CD4-positive, alpha-beta memory T cell (primary cell): ENCODE measurements at regions of chr13 and their contacts with region 1.

Region 1: GRCh38 chr13:102845630-102846260 is at the start of gene ERCC5:
- DNase-seq: peak; percentile 95 to 98 (median 97)
- H3K4me3 ChIP-seq: peak within 1 kb of the TSS; percentile 88 to 92
- H3K4me3 Mint-ChIP-seq: peak within 1 kb of the TSS; percentile 97 to 99 (median 98)
- H3K27ac ChIP-seq: peak within 1 kb of the TSS; percentile 96
- H3K27ac Mint-ChIP-seq: peak within 1 kb of the TSS; percentile 98 to 100 (median 99)
- H3K4me1 ChIP-seq: peaks cover 46% of the 10 kb centered on the region
- H3K4me1 Mint-ChIP-seq: peaks cover 27 to 55% (median 37%) of the 10 kb centered on the region in 4 donors
- H3K27me3 ChIP-seq: no peaks in the 10 kb centered on the region
- H3K27me3 Mint-ChIP-seq: no peaks in the 10 kb centered on the region
- total RNA-seq, gene ERCC5: 134 to 136 TPM

Region 2: GRCh38 chr13:102394158-102395053 is 451.3 kb before region 1 on chr13:
- CTCF ChIA-PET with region 1: interaction called, 8 read pairs
- POLR2A ChIA-PET with region 1: interaction called, 12 read pairs
- intact Hi-C with region 1: loop called (anchors 1 kb)
- DNase-seq: peak; percentile 93 to 95 (median 94)
- H3K4me3 ChIP-seq: peak overlapping the region; percentile 61 to 93
- H3K4me3 Mint-ChIP-seq: peak overlapping the region; percentile 88 to 94 (median 90)
- H3K27ac ChIP-seq: peak overlapping the region; percentile 59
- H3K27ac Mint-ChIP-seq: peak overlapping the region; percentile 86 to 95 (median 92)
- H3K4me1 ChIP-seq: peaks cover 12% of the 10 kb centered on the region
- H3K4me1 Mint-ChIP-seq: peaks cover 7 to 19% (median 13%) of the 10 kb centered on the region in 4 donors
- H3K27me3 ChIP-seq: peaks cover 9% of the 10 kb centered on the region
- H3K27me3 Mint-ChIP-seq: peaks cover 7% of the 10 kb centered on the region in 2 donors

Region 3: DNA sequence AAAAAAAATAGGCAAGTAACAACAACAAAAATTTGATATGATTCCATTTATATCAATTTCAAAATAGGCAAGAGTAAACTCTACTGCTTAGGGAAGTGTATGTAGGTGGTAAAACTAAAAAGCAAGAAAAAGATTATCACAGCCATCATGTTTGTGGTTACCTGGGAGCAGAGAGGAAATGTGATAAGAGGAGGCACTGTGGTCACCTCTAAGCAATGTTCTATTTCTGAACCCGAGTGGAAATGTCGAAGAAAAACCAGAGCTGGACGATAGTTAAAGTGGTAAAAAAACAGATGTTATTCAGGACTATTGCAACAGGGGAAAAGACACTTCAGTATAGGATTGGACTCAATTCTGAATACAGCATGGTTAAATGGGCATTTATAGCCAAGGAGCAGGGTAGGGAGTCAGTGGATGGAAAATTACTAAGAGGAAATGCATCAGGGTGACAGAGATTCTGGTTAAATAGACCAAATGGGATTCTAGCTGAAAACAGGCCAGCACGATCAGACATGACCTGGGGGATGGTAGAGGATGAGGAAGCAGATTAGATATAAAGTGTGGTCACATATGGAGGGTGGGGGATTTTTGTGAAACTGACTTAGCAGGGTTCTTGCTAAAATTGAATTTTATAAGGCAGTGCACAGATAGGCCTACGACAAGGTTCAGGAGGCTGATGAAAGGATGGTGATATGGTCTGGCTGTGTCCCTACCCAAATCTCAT is 66.1 kb before region 1 on chr13:
- CTCF ChIA-PET with region 1: interaction called, 4 read pairs
- POLR2A ChIA-PET with region 1: interaction called, 60 read pairs
- intact Hi-C with region 1: no loop called
- DNase-seq: peak; percentile 48 to 78 (median 54)
- H3K4me3 ChIP-seq: peak overlapping the region in 1 of 2 donors; percentile 20
- H3K4me3 Mint-ChIP-seq: peak overlapping the region; percentile 3 to 77 (median 64)
- H3K27ac ChIP-seq: peak overlapping the region; percentile 61
- H3K27ac Mint-ChIP-seq: peak overlapping the region; percentile 67 to 96 (median 88)
- H3K4me1 ChIP-seq: peaks cover 23% of the 10 kb centered on the region
- H3K4me1 Mint-ChIP-seq: peaks cover 15 to 51% (median 32%) of the 10 kb centered on the region in 4 donors
- H3K27me3 ChIP-seq: no peaks in the 10 kb centered on the region
- H3K27me3 Mint-ChIP-seq: no peaks in the 10 kb centered on the region

Region 4: GRCh38 chr13:102800145-102801041 is 45.4 kb before region 1 on chr13:
- CTCF ChIA-PET with region 1: interaction called, 10 read pairs
- POLR2A ChIA-PET with region 1: interaction called, 31 read pairs
- intact Hi-C with region 1: loop called (anchors 1 kb)
- DNase-seq: peak; percentile 75 to 83 (median 81)
- H3K4me3 ChIP-seq: peak overlapping the region; percentile 69 to 76
- H3K4me3 Mint-ChIP-seq: peak overlapping the region; percentile 87 to 95 (median 90)
- H3K27ac ChIP-seq: peak overlapping the region; percentile 46
- H3K27ac Mint-ChIP-seq: peak overlapping the region in 6 of 7 donors; percentile 43 to 86 (median 69)
- H3K4me1 ChIP-seq: peaks cover 18% of the 10 kb centered on the region
- H3K4me1 Mint-ChIP-seq: peaks cover 18 to 32% (median 21%) of the 10 kb centered on the region in 4 donors
- H3K27me3 ChIP-seq: no peaks in the 10 kb centered on the region
- H3K27me3 Mint-ChIP-seq: peaks cover 1 to 6% of the 10 kb centered on the region in 2 donors